ENCODE measurements at regions of chr13 and their contacts with region 1.

Region 1: GRCh38 chr13:80363890-80364503 is 23.1 kb upstream of the SPRY2 start:
- DNase-seq: peak in 1 of 14 experiments; percentile 11
- ATAC-seq: no peak
- H3K4me3 ChIP-seq: no peak overlapping the region
- H3K4me3 Mint-ChIP-seq: no peak overlapping the region
- H3K27ac ChIP-seq: no peak overlapping the region
- H3K27ac Mint-ChIP-seq: no peak overlapping the region
- H3K4me1 ChIP-seq: no peaks in the 10 kb centered on the region
- H3K4me1 Mint-ChIP-seq: no peaks in the 10 kb centered on the region
- H3K27me3 ChIP-seq: no peaks in the 10 kb centered on the region
- H3K27me3 Mint-ChIP-seq: no peaks in the 10 kb centered on the region
- CTCF ChIP-seq: peak; percentile 67

Region 2: DNA sequence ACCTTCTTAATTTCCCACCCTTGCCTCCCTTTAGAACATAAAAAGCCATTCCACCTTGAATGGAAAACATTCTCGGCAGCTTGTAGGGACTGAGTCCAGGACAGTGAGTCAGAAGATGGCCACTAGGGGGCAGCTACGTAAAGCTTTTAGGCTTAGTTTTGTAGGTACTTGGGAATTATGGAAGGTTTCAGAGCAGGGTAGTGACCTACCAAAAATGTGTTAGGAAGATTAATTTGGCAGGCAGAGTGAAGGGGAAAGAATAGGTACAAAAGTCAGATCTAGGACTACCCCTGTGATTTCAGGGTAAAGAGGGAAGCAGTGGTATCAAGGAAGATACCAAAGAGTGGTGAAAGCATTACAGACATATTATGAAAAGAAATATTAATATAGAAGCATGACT is 684.7 kb before region 1 on chr13:
- CTCF ChIA-PET with region 1: no interaction called
- POLR2A ChIA-PET with region 1: no interaction called
- intact Hi-C with region 1: loop called in 1 of 2 experiments (anchors 10 kb)
- DNase-seq: peak in 4 of 14 experiments; percentile 6 to 32 (median 21)
- ATAC-seq: no peak
- H3K4me3 ChIP-seq: no peak overlapping the region
- H3K4me3 Mint-ChIP-seq: no peak overlapping the region
- H3K27ac ChIP-seq: no peak overlapping the region
- H3K27ac Mint-ChIP-seq: no peak overlapping the region
- H3K4me1 ChIP-seq: no peaks in the 10 kb centered on the region
- H3K4me1 Mint-ChIP-seq: no peaks in the 10 kb centered on the region
- H3K27me3 ChIP-seq: no peaks in the 10 kb centered on the region
- H3K27me3 Mint-ChIP-seq: peaks cover 10% of the 10 kb centered on the region
- CTCF ChIP-seq: peak; percentile 24

Region 3: DNA sequence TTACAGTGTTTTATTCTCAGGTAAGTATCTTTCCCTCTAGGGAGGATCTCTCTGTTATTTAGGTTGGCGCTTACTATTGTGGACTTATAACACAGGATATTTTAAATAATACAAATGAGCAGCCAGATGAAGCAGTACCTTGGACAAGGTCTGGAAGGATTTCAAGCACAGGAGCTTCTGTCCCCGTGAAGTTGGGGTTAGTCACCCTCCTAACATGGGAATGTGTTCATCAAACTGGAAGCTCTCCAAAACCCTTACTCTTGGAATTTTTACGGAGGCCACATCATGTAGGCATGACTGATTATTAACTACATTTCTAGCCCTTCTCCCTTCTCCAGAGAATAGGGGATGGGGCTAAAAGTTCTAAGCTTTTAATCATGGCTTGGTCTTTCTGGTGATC is 15.2 kb after region 1 on chr13:
- CTCF ChIA-PET with region 1: no interaction called
- POLR2A ChIA-PET with region 1: no interaction called
- intact Hi-C with region 1: no loop called
- DNase-seq: no peak
- ATAC-seq: no peak
- H3K4me3 ChIP-seq: no peak overlapping the region
- H3K4me3 Mint-ChIP-seq: no peak overlapping the region
- H3K27ac ChIP-seq: no peak overlapping the region
- H3K27ac Mint-ChIP-seq: no peak overlapping the region
- H3K4me1 ChIP-seq: no peaks in the 10 kb centered on the region
- H3K4me1 Mint-ChIP-seq: no peaks in the 10 kb centered on the region
- H3K27me3 ChIP-seq: no peaks in the 10 kb centered on the region
- H3K27me3 Mint-ChIP-seq: no peaks in the 10 kb centered on the region
- CTCF ChIP-seq: no peak

Region 4: DNA sequence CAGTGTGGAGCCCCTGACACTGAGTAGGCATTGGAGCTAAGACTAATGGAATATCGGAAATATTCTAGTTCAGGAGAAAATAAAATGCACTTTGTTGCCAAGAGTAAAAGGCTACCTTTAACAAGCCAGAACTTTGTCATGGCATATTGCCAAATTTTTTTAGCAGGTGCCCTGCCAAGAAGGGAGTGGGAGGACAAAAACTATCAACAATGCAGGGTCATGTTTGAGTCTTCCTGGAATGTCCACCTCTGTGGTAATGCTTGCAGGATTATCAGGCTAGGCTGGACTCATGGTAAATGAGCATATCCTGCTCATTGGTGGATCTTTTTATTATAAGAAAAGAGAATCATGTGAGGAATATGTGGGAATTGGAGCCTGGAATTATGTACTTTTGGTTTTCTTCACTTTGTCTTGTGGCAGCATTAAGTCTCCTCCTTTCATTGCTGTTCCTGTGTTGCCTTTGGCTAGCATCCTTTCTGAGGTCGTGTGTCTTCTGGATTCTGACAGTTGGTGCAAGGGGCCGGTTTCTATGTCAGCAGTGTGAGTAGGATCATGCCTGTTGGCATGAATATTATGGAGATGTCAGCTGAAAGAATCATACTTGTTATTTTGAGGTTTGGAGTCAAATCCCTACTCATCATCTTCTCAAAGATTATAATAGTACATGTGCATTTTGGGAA is 99.8 kb after region 1 on chr13:
- CTCF ChIA-PET with region 1: no interaction called
- POLR2A ChIA-PET with region 1: no interaction called
- intact Hi-C with region 1: no loop called
- DNase-seq: no peak
- ATAC-seq: no peak
- H3K4me3 ChIP-seq: no peak overlapping the region
- H3K4me3 Mint-ChIP-seq: no peak overlapping the region
- H3K27ac ChIP-seq: no peak overlapping the region
- H3K27ac Mint-ChIP-seq: no peak overlapping the region
- H3K4me1 ChIP-seq: no peaks in the 10 kb centered on the region
- H3K4me1 Mint-ChIP-seq: no peaks in the 10 kb centered on the region
- H3K27me3 ChIP-seq: no peaks in the 10 kb centered on the region
- H3K27me3 Mint-ChIP-seq: no peaks in the 10 kb centered on the region
- CTCF ChIP-seq: no peak